Prostate gland (tissue), 2 donors: ENCODE measurements at regions of chr20 and their contacts with region 1.

Region 1: DNA sequence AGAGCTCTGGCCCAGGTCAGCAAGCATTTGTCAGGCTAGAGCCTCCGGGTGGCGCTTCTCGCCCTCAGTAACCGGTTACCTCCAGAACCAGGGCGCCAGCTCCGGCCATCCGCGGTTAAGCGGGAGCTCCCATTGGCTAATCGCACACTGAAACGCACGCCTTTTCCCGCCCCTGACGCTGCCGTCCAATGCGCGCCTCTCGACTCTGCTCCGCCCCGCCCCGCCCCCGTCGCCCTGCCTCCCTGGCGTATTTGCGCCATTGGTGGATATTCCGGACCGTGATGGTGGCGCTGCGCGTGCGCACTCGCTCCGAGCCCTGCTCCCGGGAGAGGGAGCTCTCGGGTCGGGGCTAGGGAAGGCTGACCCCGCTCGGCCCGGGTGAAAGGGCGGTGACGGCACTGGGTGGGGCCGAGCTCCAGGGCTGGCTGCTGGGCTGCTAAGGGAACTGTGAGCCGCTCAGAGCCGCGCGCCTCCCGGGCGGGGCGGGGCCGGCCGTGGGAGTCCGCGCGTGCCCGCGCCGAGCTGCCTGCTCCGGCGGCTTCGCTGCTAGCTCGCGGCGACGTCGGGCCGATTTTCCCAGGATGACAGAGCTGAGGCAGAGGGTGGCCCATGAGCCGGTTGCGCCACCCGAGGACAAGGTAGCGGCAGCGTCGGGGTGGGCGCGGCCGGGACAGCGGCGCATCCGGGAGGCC is at the start of gene CDS2:
- DNase-seq: peak; percentile 99
- H3K4me3 ChIP-seq: peak within 1 kb of the TSS; percentile 86 to 97
- H3K27ac ChIP-seq: peak within 1 kb of the TSS; percentile 93 to 94
- H3K4me1 ChIP-seq: no peaks in the 10 kb centered on the region
- H3K27me3 ChIP-seq: no peaks in the 10 kb centered on the region
- CTCF ChIP-seq: peak; percentile 64 to 87 (median 72)
- POLR2A ChIP-seq: peak; percentile 74
- total RNA-seq, gene CDS2: 26.2 to 61.8 TPM

Region 2: DNA sequence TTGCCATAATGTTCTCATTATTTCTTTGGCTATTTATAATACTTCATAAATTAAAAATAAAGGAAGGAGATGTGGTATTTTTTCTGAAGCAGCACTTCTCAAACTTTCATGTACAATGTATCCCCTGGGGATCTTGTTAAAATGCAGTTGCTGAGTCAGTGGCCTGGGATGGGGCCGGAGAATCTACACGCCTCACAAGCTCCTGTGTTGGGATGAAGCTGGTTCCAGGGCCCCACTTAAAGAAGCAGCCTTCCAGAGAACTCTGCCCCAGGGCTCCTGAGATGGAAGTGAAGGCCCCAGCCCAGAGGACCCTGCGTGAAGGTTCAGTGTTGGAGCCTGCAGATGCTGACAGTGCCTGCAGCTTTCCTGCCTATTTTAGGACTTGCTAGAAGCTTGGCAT is 85.2 kb before region 1 on chr20:
- intact Hi-C with region 1: no loop called
- DNase-seq: no peak
- H3K4me3 ChIP-seq: no peak overlapping the region
- H3K27ac ChIP-seq: no peak overlapping the region
- H3K4me1 ChIP-seq: no peaks in the 10 kb centered on the region
- H3K27me3 ChIP-seq: no peaks in the 10 kb centered on the region
- CTCF ChIP-seq: no peak
- POLR2A ChIP-seq: no peak

Region 3: GRCh38 chr20:5191829-5192569 is 65.3 kb after region 1 on chr20:
- intact Hi-C with region 1: loop called (anchors 1 kb)
- DNase-seq: peak; percentile 50
- H3K4me3 ChIP-seq: no peak overlapping the region
- H3K27ac ChIP-seq: peak overlapping the region; percentile 59 to 62
- H3K4me1 ChIP-seq: no peaks in the 10 kb centered on the region
- H3K27me3 ChIP-seq: no peaks in the 10 kb centered on the region
- CTCF ChIP-seq: peak; percentile 42 to 91 (median 77)
- POLR2A ChIP-seq: no peak